IMR-90 (cell line): ENCODE measurements at regions of chr4 and their contacts with region 1.

Region 1: GRCh38 chr4:78938868-78939666 is at the start of gene PAQR3:
- DNase-seq: peak; percentile 76
- ATAC-seq: peak; percentile 99
- H3K4me3 ChIP-seq: peak within 1 kb of the TSS; percentile 100
- H3K27ac ChIP-seq: peak within 1 kb of the TSS; percentile 64
- H3K4me1 ChIP-seq: peaks cover 2% of the 10 kb centered on the region; the same call in 1 of the 2 replicates
- H3K27me3 ChIP-seq: peaks cover 8% of the 10 kb centered on the region
- CTCF ChIP-seq: no peak
- POLR2A ChIP-seq: peak; percentile 76
- RAD21 ChIP-seq: no peak; the same call in 1 of the 2 replicates
- total RNA-seq, gene PAQR3: 11.5 and 20.0 TPM in 2 replicates

Region 2: DNA sequence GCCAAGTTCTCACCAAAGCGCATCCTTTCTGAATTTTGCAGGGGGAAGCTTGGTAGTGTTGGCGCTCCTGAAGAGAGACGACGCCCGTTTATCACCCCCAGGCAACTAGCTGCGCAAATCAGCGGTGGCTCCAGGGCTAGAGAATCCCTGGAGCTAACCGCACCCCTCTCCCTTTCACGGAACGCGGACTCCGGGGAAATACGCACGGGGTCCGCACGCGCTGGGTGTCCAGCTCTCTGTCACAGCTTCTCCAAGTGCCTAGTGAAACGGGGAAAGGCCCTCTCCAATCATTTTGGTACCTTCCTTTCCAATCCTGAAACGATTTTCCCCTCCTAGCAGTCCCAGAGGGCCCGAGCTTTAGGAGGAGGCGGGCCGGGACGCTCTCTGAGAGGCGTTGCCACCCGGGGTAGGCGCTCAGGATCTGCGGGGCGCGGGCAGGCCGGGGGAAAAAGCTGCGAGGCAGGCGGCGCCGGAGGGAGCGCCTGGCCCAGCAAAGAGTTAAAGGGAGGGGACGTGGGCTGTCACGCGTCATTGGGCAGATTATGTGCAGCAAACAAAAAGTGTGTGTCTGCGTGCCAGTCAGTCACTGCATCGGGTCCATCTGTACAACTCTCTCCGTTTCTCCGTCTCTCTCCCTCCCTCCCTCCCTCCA is 1258.0 kb after region 1 on chr4 and contains the start of gene PRDM8:
- CTCF ChIA-PET with region 1: no interaction called
- POLR2A ChIA-PET with region 1: no interaction called
- dilution Hi-C with region 1: no loop called
- in situ Hi-C with region 1: loop called (anchors 10 kb)
- intact Hi-C with region 1: no loop called
- DNase-seq: peak; percentile 73
- ATAC-seq: peak; percentile 62
- H3K4me3 ChIP-seq: peak within 1 kb of the TSS; percentile 75
- H3K27ac ChIP-seq: peak within 1 kb of the TSS; percentile 77
- H3K4me1 ChIP-seq: peaks cover 8% of the 10 kb centered on the region
- H3K27me3 ChIP-seq: no peaks in the 10 kb centered on the region
- CTCF ChIP-seq: no peak
- POLR2A ChIP-seq: 0 out of 2 replicates have a peak, but pooled peaks have one; percentile 46
- RAD21 ChIP-seq: no peak
- total RNA-seq, gene PRDM8: 5.0 and 5.7 TPM in 2 replicates

Region 3: GRCh38 chr4:80335554-80336358 is 1396.7 kb after region 1 on chr4 and contains the start of gene CFAP299:
- CTCF ChIA-PET with region 1: no interaction called
- POLR2A ChIA-PET with region 1: no interaction called
- dilution Hi-C with region 1: no loop called
- in situ Hi-C with region 1: loop called (anchors 25 kb)
- intact Hi-C with region 1: no loop called
- DNase-seq: peak; percentile 90
- ATAC-seq: peak; percentile 99
- H3K4me3 ChIP-seq: peak within 1 kb of the TSS; percentile 84
- H3K27ac ChIP-seq: no peak within 1 kb of the TSS
- H3K4me1 ChIP-seq: peaks cover 4% of the 10 kb centered on the region
- H3K27me3 ChIP-seq: no peaks in the 10 kb centered on the region
- CTCF ChIP-seq: peak; percentile 58
- POLR2A ChIP-seq: 0 out of 2 replicates have a peak, but pooled peaks have one; percentile 25
- RAD21 ChIP-seq: peak; percentile 59
- total RNA-seq, gene CFAP299: 1.1 and 1.9 TPM in 2 replicates